A549 (cell line): ENCODE measurements at regions of chr1 and their contacts with region 1.

Region 1: GRCh38 chr1:224065455-224065854 is 48.5 kb upstream of the FBXO28 start:
- DNase-seq: no peak
- ATAC-seq: no peak
- H3K4me3 ChIP-seq: no peak overlapping the region
- H3K27ac ChIP-seq: no peak overlapping the region
- H3K4me1 ChIP-seq: 0 out of 3 replicates have a peak, but pooled peaks cover 4% of the 10 kb centered on the region
- CTCF ChIP-seq: no peak
- EP300 ChIP-seq: no peak
- POLR2A ChIP-seq: no peak
- RAD21 ChIP-seq: no peak

Region 2: GRCh38 chr1:224052772-224053171 is 12.7 kb before region 1 on chr1:
- CTCF ChIA-PET with region 1: interaction called, 17 read pairs
- POLR2A ChIA-PET with region 1: no interaction called
- DNase-seq: no peak
- ATAC-seq: no peak
- H3K4me3 ChIP-seq: no peak overlapping the region
- H3K27ac ChIP-seq: no peak overlapping the region
- H3K4me1 ChIP-seq: peaks cover 5% of the 10 kb centered on the region; the same call in 2 of the 3 replicates
- CTCF ChIP-seq: no peak
- EP300 ChIP-seq: no peak
- POLR2A ChIP-seq: no peak
- RAD21 ChIP-seq: no peak